A673 (cell line): ENCODE measurements at regions of chr9 and their contacts with region 1.

Region 1: DNA sequence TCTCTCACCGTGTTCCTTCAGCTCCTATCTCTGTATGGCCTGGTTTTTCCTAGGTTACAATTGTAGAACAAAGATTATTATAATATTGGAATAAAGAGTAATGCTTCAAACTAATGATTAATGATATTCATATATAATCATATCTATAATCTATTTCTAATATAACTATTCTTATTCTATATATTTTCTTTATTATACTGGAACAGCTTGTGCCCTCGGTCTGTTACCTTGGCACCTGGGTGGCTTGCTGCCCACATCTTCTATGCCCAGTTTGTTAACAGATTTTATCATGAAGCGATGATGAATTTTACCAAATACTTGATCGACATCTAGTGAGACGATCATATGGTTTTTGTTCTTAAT is 363.6 kb upstream of the TYRP1 start:
- DNase-seq: no peak
- H3K4me3 ChIP-seq: no peak overlapping the region
- H3K27ac ChIP-seq: no peak overlapping the region
- H3K4me1 ChIP-seq: no peaks in the 10 kb centered on the region
- H3K27me3 ChIP-seq: no peaks in the 10 kb centered on the region
- CTCF ChIP-seq: no peak; the same call in 1 of the 2 replicates

Region 2: DNA sequence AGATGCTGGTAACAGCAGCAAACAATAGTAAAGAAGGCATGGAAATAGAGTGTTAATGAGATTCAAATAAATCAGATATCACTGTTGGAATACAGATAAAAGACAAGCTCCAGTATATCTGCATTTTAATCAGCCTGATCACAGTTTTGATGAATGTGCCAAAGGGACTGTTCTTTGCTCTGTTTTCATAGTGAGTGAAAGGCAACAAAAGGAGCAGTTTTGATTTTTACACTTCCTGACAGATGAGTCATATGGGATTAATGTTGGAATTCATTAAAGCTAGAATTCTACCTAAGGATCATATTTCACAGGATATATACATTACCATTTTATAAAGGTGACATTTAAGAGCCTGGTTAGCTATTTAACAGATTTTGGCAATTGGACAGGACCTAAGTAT is 973.5 kb before region 1 on chr9:
- CTCF ChIA-PET with region 1: no interaction called
- POLR2A ChIA-PET with region 1: no interaction called
- intact Hi-C with region 1: loop called (anchors 10 kb)
- DNase-seq: peak; percentile 36
- H3K4me3 ChIP-seq: no peak overlapping the region
- H3K27ac ChIP-seq: no peak overlapping the region
- H3K4me1 ChIP-seq: peaks cover 9% of the 10 kb centered on the region
- H3K27me3 ChIP-seq: no peaks in the 10 kb centered on the region
- CTCF ChIP-seq: no peak

Region 3: GRCh38 chr9:11821306-11821975 is 508.2 kb before region 1 on chr9:
- CTCF ChIA-PET with region 1: no interaction called
- POLR2A ChIA-PET with region 1: no interaction called
- intact Hi-C with region 1: no loop called
- DNase-seq: no peak
- H3K4me3 ChIP-seq: no peak overlapping the region
- H3K27ac ChIP-seq: no peak overlapping the region
- H3K4me1 ChIP-seq: peaks cover 7% of the 10 kb centered on the region
- H3K27me3 ChIP-seq: no peaks in the 10 kb centered on the region
- CTCF ChIP-seq: no peak